ENCODE measurements at regions of chr5 and their contacts with region 1.

Region 1: GRCh38 chr5:73201547-73202513 is 28.8 kb downstream of the TMEM174 start:
- DNase-seq: peak; percentile 86
- ATAC-seq: peak; percentile 93 to 94
- H3K4me3 ChIP-seq: no peak overlapping the region
- H3K27ac ChIP-seq: no peak overlapping the region
- H3K4me1 ChIP-seq: no peaks in the 10 kb centered on the region
- H3K27me3 ChIP-seq: peaks cover 31% of the 10 kb centered on the region
- CTCF ChIP-seq: peak; percentile 82

Region 2: GRCh38 chr5:73088026-73088425 is 113.8 kb before region 1 on chr5:
- intact Hi-C with region 1: loop called (anchors 10 kb)
- DNase-seq: no peak
- ATAC-seq: no peak
- H3K4me3 ChIP-seq: no peak overlapping the region
- H3K27ac ChIP-seq: no peak overlapping the region
- H3K4me1 ChIP-seq: no peaks in the 10 kb centered on the region
- H3K27me3 ChIP-seq: no peaks in the 10 kb centered on the region
- CTCF ChIP-seq: no peak

Region 3: GRCh38 chr5:73242718-73243117 is 40.9 kb after region 1 on chr5:
- intact Hi-C with region 1: no loop called
- DNase-seq: no peak
- ATAC-seq: no peak
- H3K4me3 ChIP-seq: no peak overlapping the region
- H3K27ac ChIP-seq: no peak overlapping the region
- H3K4me1 ChIP-seq: no peaks in the 10 kb centered on the region
- H3K27me3 ChIP-seq: peaks cover 17% of the 10 kb centered on the region
- CTCF ChIP-seq: no peak

Region 4: GRCh38 chr5:73471654-73472053 is 269.8 kb after region 1 on chr5:
- intact Hi-C with region 1: no loop called
- DNase-seq: no peak
- ATAC-seq: no peak
- H3K4me3 ChIP-seq: no peak overlapping the region
- H3K27ac ChIP-seq: no peak overlapping the region
- H3K4me1 ChIP-seq: no peaks in the 10 kb centered on the region
- H3K27me3 ChIP-seq: no peaks in the 10 kb centered on the region
- CTCF ChIP-seq: no peak

Measured in lower lobe of right lung (tissue), 2 donors.